ENCODE measurements at regions of chr3 and their contacts with region 1.

Region 1: GRCh38 chr3:113019182-113020137 is 28.7 kb downstream of the GTPBP8 start:
- DNase-seq: peak; percentile 89
- ATAC-seq: peak; percentile 85
- H3K4me3 ChIP-seq: peak overlapping the region; percentile 75 to 84 (median 84)
- H3K4me3 Mint-ChIP-seq: peak overlapping the region; percentile 94
- H3K27ac ChIP-seq: peak overlapping the region; percentile 90 to 91
- H3K27ac Mint-ChIP-seq: peak overlapping the region; percentile 94
- H3K4me1 ChIP-seq: peaks cover 22 to 25% of the 10 kb centered on the region in 2 donors
- H3K4me1 Mint-ChIP-seq: peaks cover 37% of the 10 kb centered on the region
- H3K27me3 ChIP-seq: no peaks in the 10 kb centered on the region
- H3K27me3 Mint-ChIP-seq: no peaks in the 10 kb centered on the region
- CTCF ChIP-seq: no peak

Region 2: GRCh38 chr3:112561731-112562688 is 457.4 kb before region 1 on chr3 and contains the starts of genes ATG3 and SLC35A5:
- CTCF ChIA-PET with region 1: no interaction called
- POLR2A ChIA-PET with region 1: no interaction called
- intact Hi-C with region 1: loop called (anchors 10 kb)
- DNase-seq: peak; percentile 99
- ATAC-seq: peak; percentile 79
- H3K4me3 ChIP-seq: peak within 1 kb of the TSS; percentile 75 to 99 (median 94)
- H3K4me3 Mint-ChIP-seq: peak within 1 kb of the TSS; percentile 99
- H3K27ac ChIP-seq: peak within 1 kb of the TSS; percentile 93 to 96
- H3K27ac Mint-ChIP-seq: peak within 1 kb of the TSS; percentile 100
- H3K4me1 ChIP-seq: peaks cover 23 to 34% of the 10 kb centered on the region in 2 donors
- H3K4me1 Mint-ChIP-seq: peaks cover 50% of the 10 kb centered on the region
- H3K27me3 ChIP-seq: no peaks in the 10 kb centered on the region
- H3K27me3 Mint-ChIP-seq: no peaks in the 10 kb centered on the region
- CTCF ChIP-seq: no peak
- total RNA-seq, gene ATG3: 48.8 and 54.9 TPM in 2 replicates
- total RNA-seq, gene SLC35A5: 32.1 and 34.9 TPM in 2 replicates

Region 3: DNA sequence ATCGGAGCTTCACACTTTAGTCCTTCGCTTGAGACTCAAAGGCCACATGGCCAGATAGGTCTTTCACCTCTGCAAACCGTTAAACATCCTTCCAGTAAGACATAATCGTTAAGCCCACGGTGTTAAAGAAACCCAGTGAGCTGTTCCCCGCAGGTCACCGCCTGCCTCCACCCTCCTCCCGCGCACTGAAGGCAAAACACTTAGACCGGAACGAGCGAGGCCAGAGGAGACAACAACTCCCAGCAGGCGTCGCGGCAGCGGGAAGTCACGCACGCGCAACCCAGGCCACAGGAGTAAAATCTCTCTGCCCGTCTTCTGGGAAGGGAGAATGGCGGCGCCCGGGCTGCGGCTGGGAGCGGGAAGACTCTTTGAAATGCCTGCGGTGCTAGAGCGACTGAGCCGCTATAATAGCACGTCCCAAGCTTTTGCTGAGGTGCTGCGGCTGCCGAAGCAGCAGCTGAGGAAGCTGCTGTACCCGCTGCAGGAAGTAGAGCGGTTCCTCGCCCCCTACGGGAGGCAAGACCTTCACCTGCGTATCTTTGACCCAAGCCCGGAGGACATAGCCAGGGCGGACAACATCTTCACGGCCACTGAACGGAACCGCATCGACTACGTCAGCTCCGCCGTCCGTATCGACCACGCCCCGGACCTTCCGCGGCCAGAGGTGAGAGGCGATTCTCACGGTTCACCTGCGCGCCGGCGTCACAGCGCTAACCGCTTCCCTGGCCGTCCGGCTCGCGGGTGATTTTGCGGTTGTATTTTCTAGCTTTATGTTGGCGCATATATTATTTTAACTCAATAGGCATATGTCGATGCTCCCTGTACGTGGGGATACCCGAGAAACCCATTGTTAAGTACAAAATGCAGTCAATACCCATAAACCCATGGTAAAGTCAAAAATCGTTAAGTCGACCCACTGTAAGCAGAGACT is 28.5 kb before region 1 on chr3 and contains the start of gene GTPBP8:
- CTCF ChIA-PET with region 1: interaction called, 8 read pairs
- POLR2A ChIA-PET with region 1: interaction called, 11 read pairs
- intact Hi-C with region 1: loop called (anchors 1 kb)
- DNase-seq: peak; percentile 92
- ATAC-seq: peak; percentile 84
- H3K4me3 ChIP-seq: peak within 1 kb of the TSS; percentile 63 to 89 (median 76)
- H3K4me3 Mint-ChIP-seq: peak within 1 kb of the TSS; percentile 95
- H3K27ac ChIP-seq: peak within 1 kb of the TSS; percentile 82 to 98
- H3K27ac Mint-ChIP-seq: peak within 1 kb of the TSS; percentile 98
- H3K4me1 ChIP-seq: peaks cover 11 to 12% of the 10 kb centered on the region in 2 donors
- H3K4me1 Mint-ChIP-seq: peaks cover 30% of the 10 kb centered on the region
- H3K27me3 ChIP-seq: no peaks in the 10 kb centered on the region
- H3K27me3 Mint-ChIP-seq: no peaks in the 10 kb centered on the region
- CTCF ChIP-seq: no peak
- total RNA-seq, gene GTPBP8: 23.4 and 23.5 TPM in 2 replicates

Region 4: DNA sequence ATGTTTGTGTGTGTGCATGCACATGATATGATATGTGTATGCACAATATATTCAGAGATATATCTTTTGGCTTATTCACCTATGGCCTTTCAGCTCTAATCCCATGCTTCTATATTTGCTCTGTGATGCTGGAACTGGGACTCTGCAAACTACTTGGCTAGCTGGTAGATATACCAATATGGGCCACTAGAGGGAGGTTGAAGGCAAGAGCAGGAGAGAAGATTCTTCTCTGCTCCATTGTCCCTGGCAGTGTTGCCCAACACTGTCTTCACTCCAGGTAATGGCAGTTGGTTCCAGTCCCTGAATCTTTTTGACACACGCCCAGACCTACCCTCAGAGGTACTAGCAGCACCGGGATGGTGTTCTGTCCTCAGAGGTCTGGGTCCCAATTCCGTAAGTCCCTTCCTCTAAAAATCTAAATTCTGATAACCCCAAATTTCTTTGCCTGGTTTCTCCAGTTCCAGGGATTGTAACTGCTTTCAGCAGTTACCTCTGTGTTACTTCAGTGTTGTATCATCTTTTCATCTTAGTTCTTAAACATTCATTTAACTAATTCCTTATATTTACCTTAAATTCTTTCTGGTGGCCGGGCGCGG is 16.0 kb after region 1 on chr3:
- CTCF ChIA-PET with region 1: interaction called, 27 read pairs
- POLR2A ChIA-PET with region 1: no interaction called
- intact Hi-C with region 1: no loop called
- DNase-seq: peak; percentile 66
- ATAC-seq: peak; percentile 76
- H3K4me3 ChIP-seq: no peak overlapping the region
- H3K4me3 Mint-ChIP-seq: no peak overlapping the region
- H3K27ac ChIP-seq: no peak overlapping the region
- H3K27ac Mint-ChIP-seq: no peak overlapping the region
- H3K4me1 ChIP-seq: no peaks in the 10 kb centered on the region
- H3K4me1 Mint-ChIP-seq: no peaks in the 10 kb centered on the region
- H3K27me3 ChIP-seq: no peaks in the 10 kb centered on the region
- H3K27me3 Mint-ChIP-seq: no peaks in the 10 kb centered on the region
- CTCF ChIP-seq: peak; percentile 88